ENCODE measurements at regions of chr10 and their contacts with region 1.

Region 1: DNA sequence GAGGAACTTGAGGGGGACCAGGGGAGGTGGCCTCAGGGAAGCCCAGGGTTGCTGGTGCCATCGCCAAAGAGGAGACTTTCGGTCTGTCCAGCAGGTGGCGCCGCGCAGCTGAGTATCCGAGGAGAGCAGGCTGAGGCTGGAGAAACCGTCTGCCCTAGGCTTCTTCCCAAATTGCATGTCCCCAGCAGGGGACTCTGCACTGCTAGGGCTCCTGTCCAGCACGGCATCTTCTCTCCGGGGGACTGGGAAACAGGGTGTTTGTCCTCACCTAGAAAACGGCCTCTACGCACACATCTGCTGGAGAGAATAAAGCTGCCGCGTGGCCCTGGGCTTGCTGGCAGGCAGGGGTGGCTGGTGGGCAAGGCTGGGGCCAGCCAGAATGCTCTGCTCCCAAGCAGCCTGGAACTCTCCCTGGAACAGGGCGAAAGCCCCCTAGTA is 161.9 kb downstream of the SH2D4B start:
- DNase-seq: peak; percentile 89
- ATAC-seq: peak; percentile 93
- H3K4me3 Mint-ChIP-seq: no peak overlapping the region
- H3K27ac Mint-ChIP-seq: no peak overlapping the region
- H3K4me1 Mint-ChIP-seq: no peaks in the 10 kb centered on the region
- H3K27me3 Mint-ChIP-seq: no peaks in the 10 kb centered on the region

Region 2: DNA sequence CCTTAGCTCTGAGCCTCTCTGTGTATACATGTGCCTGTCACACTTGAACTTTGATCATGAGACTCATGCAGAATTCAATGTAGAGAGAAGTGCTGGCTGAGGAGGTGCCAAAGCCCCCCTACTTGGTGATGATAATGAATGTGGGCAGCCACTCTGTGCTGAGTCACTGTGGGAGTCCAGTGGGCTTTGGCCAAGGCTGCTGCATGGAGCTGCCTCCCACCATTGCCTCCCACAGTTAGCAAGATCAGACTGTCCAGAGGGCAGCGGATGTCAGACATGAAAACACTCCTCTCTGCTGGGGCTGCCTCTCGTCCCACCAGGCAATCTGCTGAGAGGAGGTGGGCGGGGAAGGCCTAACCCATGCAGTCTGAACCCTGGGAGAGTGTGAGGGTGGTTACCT is 18.4 kb after region 1 on chr10:
- CTCF ChIA-PET with region 1: interaction called, 10 read pairs
- POLR2A ChIA-PET with region 1: no interaction called
- intact Hi-C with region 1: no loop called
- DNase-seq: no peak
- ATAC-seq: no peak
- H3K4me3 Mint-ChIP-seq: no peak overlapping the region
- H3K27ac Mint-ChIP-seq: no peak overlapping the region
- H3K4me1 Mint-ChIP-seq: no peaks in the 10 kb centered on the region
- H3K27me3 Mint-ChIP-seq: peaks cover 1% of the 10 kb centered on the region

Region 3: GRCh38 chr10:80769700-80770160 is 70.1 kb after region 1 on chr10:
- CTCF ChIA-PET with region 1: no interaction called
- POLR2A ChIA-PET with region 1: no interaction called
- intact Hi-C with region 1: no loop called
- DNase-seq: no peak
- ATAC-seq: no peak
- H3K4me3 Mint-ChIP-seq: no peak overlapping the region
- H3K27ac Mint-ChIP-seq: no peak overlapping the region
- H3K4me1 Mint-ChIP-seq: no peaks in the 10 kb centered on the region
- H3K27me3 Mint-ChIP-seq: peaks cover 22% of the 10 kb centered on the region

Region 4: DNA sequence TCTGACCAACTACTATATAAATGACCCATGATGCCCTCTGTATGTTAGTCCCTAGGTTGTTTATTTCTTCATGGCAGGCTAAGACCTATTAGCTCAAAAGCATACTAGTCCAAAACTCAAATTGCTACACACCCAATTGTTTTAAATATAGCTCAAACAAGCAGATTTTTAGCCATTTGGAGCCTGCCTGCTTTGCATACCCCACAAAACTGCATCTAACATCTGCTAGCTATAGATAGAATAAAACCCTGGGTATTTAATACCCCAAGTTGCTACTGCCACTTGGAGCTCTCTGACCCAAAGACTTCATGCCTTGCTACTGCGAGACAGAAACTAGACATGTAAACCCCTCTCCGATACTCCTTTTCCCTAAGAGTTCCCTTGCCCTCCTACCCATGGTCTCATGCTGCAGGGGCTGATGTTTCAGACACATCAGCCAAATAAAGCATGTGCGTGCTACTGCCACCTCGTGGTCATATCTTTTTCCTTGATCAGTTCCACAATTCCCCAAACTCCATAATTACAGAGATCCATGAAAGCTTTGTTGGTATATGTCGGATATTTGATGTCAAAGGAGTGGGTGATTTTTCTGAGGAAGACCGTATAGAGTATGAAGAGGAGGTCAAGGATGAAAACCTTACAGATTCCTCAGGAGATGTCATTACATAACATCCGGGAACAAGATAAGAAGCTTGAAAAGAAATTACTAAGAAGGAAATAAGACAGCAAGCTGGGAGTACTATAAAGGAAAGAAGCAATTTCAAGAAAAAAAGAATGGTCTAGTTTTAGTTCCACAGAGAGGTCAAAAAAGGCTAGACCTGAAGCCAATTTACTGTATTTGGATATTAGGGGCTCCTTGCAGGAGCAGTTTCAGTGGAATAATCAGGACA is 224.7 kb after region 1 on chr10:
- CTCF ChIA-PET with region 1: interaction called, 13 read pairs
- POLR2A ChIA-PET with region 1: no interaction called
- intact Hi-C with region 1: loop called (anchors 1 to 5 kb)
- DNase-seq: peak; percentile 44
- ATAC-seq: no peak
- H3K4me3 Mint-ChIP-seq: no peak overlapping the region
- H3K27ac Mint-ChIP-seq: no peak overlapping the region
- H3K4me1 Mint-ChIP-seq: no peaks in the 10 kb centered on the region
- H3K27me3 Mint-ChIP-seq: peaks cover 7% of the 10 kb centered on the region

Region 5: GRCh38 chr10:81018708-81019365 is 319.2 kb after region 1 on chr10:
- CTCF ChIA-PET with region 1: interaction called, 9 read pairs
- POLR2A ChIA-PET with region 1: no interaction called
- intact Hi-C with region 1: loop called (anchors 1 kb)
- DNase-seq: peak; percentile 26
- ATAC-seq: peak; percentile 70
- H3K4me3 Mint-ChIP-seq: no peak overlapping the region
- H3K27ac Mint-ChIP-seq: no peak overlapping the region
- H3K4me1 Mint-ChIP-seq: no peaks in the 10 kb centered on the region
- H3K27me3 Mint-ChIP-seq: peaks cover 8% of the 10 kb centered on the region

Region 6: GRCh38 chr10:81179805-81180452 is 480.3 kb after region 1 on chr10:
- CTCF ChIA-PET with region 1: interaction called, 13 read pairs
- POLR2A ChIA-PET with region 1: no interaction called
- intact Hi-C with region 1: loop called in 1 of 2 experiments (anchors 5 kb)
- DNase-seq: peak; percentile 5
- ATAC-seq: no peak
- H3K4me3 Mint-ChIP-seq: no peak overlapping the region
- H3K27ac Mint-ChIP-seq: no peak overlapping the region
- H3K4me1 Mint-ChIP-seq: no peaks in the 10 kb centered on the region
- H3K27me3 Mint-ChIP-seq: no peaks in the 10 kb centered on the region

Measured in activated CD4-positive, alpha-beta T cell treated with anti-CD3 and anti-CD28 coated beads for 36 hours (primary cell).